Posterior vena cava (tissue), 2 donors: ENCODE measurements at regions of chr17 and their contacts with region 1.

Region 1: DNA sequence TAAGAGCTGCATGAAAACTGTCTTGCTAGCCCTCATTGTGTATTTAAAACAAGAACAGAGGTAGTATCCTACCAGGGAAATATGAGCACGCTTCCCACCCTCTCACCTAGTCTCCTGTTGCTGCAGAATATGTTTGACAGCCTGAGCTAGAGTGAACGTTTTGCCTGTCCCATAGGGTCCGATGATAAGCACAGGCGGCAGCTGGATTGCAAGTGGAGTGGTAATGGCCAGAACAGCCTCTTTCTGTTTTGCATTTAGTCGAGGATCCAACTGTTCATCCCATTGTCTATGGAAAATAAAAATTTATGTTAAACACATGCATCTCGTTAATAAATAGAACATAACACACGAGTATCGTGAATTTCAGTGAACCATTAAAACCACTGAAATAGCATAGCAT is 84.2 kb downstream of the HELZ start:
- DNase-seq: no peak

Region 2: DNA sequence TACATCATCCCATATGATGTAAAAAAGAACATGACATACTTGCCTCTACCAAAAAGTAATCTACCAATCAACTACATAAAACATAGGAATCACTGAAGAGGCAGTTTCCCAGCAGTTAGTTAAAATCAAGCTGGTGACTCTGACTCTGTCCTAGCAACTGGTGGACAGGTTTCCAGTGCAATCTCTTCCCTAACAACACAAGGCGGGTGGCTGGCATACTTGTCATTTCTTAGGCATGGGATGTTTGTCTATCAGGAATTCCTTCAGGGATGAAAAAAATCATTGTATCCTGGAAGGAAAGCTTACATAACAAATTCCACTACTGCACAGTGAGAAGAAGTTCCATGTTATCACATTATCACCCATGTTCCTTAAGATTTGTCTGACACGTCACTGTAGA is 33.3 kb after region 1 on chr17:
- intact Hi-C with region 1: loop called in 1 of 2 experiments (anchors 1 kb)
- DNase-seq: no peak